A673 (cell line): ENCODE measurements at regions of chr3 and their contacts with region 1.

Region 1: GRCh38 chr3:155701882-155702465 is 42.9 kb downstream of the PLCH1 start:
- DNase-seq: peak; percentile 82
- H3K4me3 ChIP-seq: no peak overlapping the region
- H3K27ac ChIP-seq: no peak overlapping the region
- H3K4me1 ChIP-seq: no peaks in the 10 kb centered on the region
- H3K27me3 ChIP-seq: no peaks in the 10 kb centered on the region
- CTCF ChIP-seq: peak; percentile 70

Region 2: GRCh38 chr3:154758109-154758868 is 943.7 kb before region 1 on chr3:
- CTCF ChIA-PET with region 1: no interaction called
- POLR2A ChIA-PET with region 1: no interaction called
- intact Hi-C with region 1: loop called (anchors 10 kb)
- DNase-seq: peak; percentile 31
- H3K4me3 ChIP-seq: no peak overlapping the region
- H3K27ac ChIP-seq: no peak overlapping the region
- H3K4me1 ChIP-seq: no peaks in the 10 kb centered on the region
- H3K27me3 ChIP-seq: no peaks in the 10 kb centered on the region
- CTCF ChIP-seq: peak; percentile 59

Region 3: DNA sequence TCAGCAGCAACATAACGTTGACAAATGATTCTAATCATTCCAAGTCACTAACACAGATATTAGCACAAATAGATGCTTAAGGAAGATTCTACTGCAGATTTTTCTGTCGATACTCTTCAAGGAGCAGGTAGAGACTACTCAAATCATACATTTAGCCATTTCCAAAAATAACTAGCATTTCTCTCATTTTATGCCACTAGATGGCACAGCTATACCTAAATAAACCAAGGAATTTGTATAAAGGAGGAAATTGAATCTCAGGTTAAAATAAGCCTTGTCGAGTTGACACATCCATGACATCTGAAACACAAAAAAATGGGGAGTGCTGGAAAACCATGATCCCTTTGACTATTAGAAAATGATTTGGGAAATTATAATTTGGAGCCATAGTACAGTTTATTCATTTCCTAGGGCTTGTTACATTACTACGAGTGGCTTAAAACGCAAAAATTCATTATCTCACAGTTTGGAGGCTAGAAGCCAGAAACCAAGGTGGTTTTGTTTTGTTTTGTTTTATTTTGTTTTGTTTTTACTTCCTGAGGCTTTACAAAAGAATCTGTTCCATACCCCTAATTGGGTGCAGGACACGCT is 349.0 kb before region 1 on chr3:
- CTCF ChIA-PET with region 1: interaction called, 16 read pairs
- POLR2A ChIA-PET with region 1: no interaction called
- intact Hi-C with region 1: loop called (anchors 1 kb)
- DNase-seq: peak; percentile 70
- H3K4me3 ChIP-seq: no peak overlapping the region
- H3K27ac ChIP-seq: no peak overlapping the region
- H3K4me1 ChIP-seq: no peaks in the 10 kb centered on the region
- H3K27me3 ChIP-seq: no peaks in the 10 kb centered on the region
- CTCF ChIP-seq: peak; percentile 65

Region 4: GRCh38 chr3:155382396-155383042 is 319.5 kb before region 1 on chr3:
- CTCF ChIA-PET with region 1: interaction called, 27 read pairs
- POLR2A ChIA-PET with region 1: no interaction called
- intact Hi-C with region 1: loop called (anchors 1 kb)
- DNase-seq: peak; percentile 80
- H3K4me3 ChIP-seq: no peak overlapping the region
- H3K27ac ChIP-seq: no peak overlapping the region
- H3K4me1 ChIP-seq: no peaks in the 10 kb centered on the region
- H3K27me3 ChIP-seq: no peaks in the 10 kb centered on the region
- CTCF ChIP-seq: peak; percentile 92

Region 5: GRCh38 chr3:155805802-155806618 is 104.0 kb after region 1 on chr3 and contains the start of gene C3orf33:
- CTCF ChIA-PET with region 1: no interaction called
- POLR2A ChIA-PET with region 1: no interaction called
- intact Hi-C with region 1: no loop called
- DNase-seq: peak; percentile 81
- H3K4me3 ChIP-seq: peak within 1 kb of the TSS; percentile 88
- H3K27ac ChIP-seq: peak within 1 kb of the TSS; percentile 95
- H3K4me1 ChIP-seq: peaks cover 5% of the 10 kb centered on the region
- H3K27me3 ChIP-seq: no peaks in the 10 kb centered on the region
- CTCF ChIP-seq: peak; percentile 87
- total RNA-seq, gene C3orf33: 2.9 and 3.5 TPM in 2 replicates